Left ventricle myocardium inferior (tissue), 1 donor: ENCODE measurements at regions of chr1 and their contacts with region 1.

Region 1: GRCh38 chr1:113140588-113141446 is 67.8 kb downstream of the LRIG2 start:
- DNase-seq: peak; percentile 40
- H3K4me3 ChIP-seq: peak overlapping the region; percentile 44
- H3K27ac ChIP-seq: peak overlapping the region; percentile 16
- H3K4me1 ChIP-seq: peaks cover 28% of the 10 kb centered on the region
- H3K27me3 ChIP-seq: no peaks in the 10 kb centered on the region
- CTCF ChIP-seq: peak; percentile 88

Region 2: GRCh38 chr1:113452921-113453770 is 312.3 kb after region 1 on chr1:
- intact Hi-C with region 1: loop called (anchors 10 kb)
- DNase-seq: no peak
- H3K4me3 ChIP-seq: no peak overlapping the region
- H3K27ac ChIP-seq: no peak overlapping the region
- H3K4me1 ChIP-seq: peaks cover 10% of the 10 kb centered on the region
- H3K27me3 ChIP-seq: no peaks in the 10 kb centered on the region
- CTCF ChIP-seq: peak; percentile 64

Region 3: GRCh38 chr1:113677250-113678158 is 536.7 kb after region 1 on chr1:
- intact Hi-C with region 1: loop called (anchors 2 kb)
- DNase-seq: no peak
- H3K4me3 ChIP-seq: no peak overlapping the region
- H3K27ac ChIP-seq: no peak overlapping the region
- H3K4me1 ChIP-seq: peaks cover 11% of the 10 kb centered on the region
- H3K27me3 ChIP-seq: no peaks in the 10 kb centered on the region
- CTCF ChIP-seq: peak; percentile 72